Tibial artery (tissue), 4 donors: ENCODE measurements at regions of chr13 and their contacts with region 1.

Region 1: DNA sequence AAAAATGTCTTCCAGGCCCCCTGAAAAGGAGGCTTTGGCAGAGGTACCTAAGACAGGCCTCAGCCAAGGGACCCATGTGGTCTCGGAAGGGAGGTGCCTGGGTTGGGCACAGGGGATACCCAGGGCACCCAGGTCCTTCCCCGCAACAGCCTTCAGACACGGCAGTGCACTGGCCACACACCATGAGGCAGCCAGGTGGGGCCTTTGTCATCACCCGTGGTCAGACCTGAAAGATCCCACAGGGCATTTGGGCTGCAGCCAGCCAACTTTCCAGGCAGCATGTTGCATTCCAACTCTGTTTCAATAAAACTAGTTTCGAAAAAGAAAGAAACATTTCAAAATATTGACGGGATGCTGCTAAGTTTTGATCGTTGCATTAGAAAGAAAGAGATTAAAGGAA is 4.7 kb upstream of the TUBGCP3 start:
- DNase-seq: no peak
- H3K4me3 ChIP-seq: no peak overlapping the region
- H3K27ac ChIP-seq: no peak overlapping the region
- H3K4me1 ChIP-seq: peaks cover 0 to 6% (median 3%) of the 10 kb centered on the region in 4 donors
- H3K27me3 ChIP-seq: peaks cover 0 to 3% of the 10 kb centered on the region in 2 donors
- CTCF ChIP-seq: no peak

Region 2: GRCh38 chr13:112689303-112690165 is 96.9 kb after region 1 on chr13 and contains the start of gene ATP11A:
- intact Hi-C with region 1: loop called (anchors 5 kb)
- DNase-seq: peak; percentile 86 to 95
- H3K4me3 ChIP-seq: peak within 1 kb of the TSS; percentile 72 to 84
- H3K27ac ChIP-seq: peak within 1 kb of the TSS; percentile 85
- H3K4me1 ChIP-seq: peaks cover 0 to 20% (median 11%) of the 10 kb centered on the region in 4 donors
- H3K27me3 ChIP-seq: no peaks in the 10 kb centered on the region
- CTCF ChIP-seq: no peak